Activated CD4-positive, alpha-beta memory T cell treated with anti-CD3 and anti-CD28 coated beads for 36 hours (primary cell): ENCODE measurements at regions of chr6 and their contacts with region 1.

Region 1: GRCh38 chr6:45830441-45831139 is 185.1 kb downstream of the CLIC5 start:
- DNase-seq: peak; percentile 88
- H3K4me3 Mint-ChIP-seq: peak overlapping the region; percentile 75
- H3K27ac Mint-ChIP-seq: peak overlapping the region; percentile 95
- H3K4me1 Mint-ChIP-seq: peaks cover 59% of the 10 kb centered on the region
- H3K27me3 Mint-ChIP-seq: peaks cover 2% of the 10 kb centered on the region

Region 2: DNA sequence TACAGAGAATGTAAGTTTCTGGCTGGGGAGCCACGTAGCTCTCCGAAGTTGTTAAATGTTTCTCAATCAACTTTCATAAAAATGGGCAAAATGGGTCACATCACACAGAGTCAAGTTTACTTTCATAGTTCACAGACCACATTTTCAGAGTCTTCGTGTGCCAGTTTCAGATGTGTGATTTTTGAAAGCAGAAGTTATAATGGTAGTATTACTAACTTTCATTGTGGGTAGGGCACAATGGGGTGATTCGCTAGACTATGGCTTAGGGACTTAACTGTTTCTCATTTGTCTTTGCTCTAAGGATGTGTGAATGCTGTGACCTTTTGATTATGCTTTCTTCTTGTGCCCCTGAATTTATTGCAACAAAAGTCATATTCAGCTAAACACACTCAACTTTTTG is 343.9 kb before region 1 on chr6:
- CTCF ChIA-PET with region 1: no interaction called
- POLR2A ChIA-PET with region 1: no interaction called
- intact Hi-C with region 1: loop called (anchors 5 kb)
- DNase-seq: peak; percentile 45
- H3K4me3 Mint-ChIP-seq: peak overlapping the region; percentile 21
- H3K27ac Mint-ChIP-seq: peak overlapping the region; percentile 67
- H3K4me1 Mint-ChIP-seq: peaks cover 56% of the 10 kb centered on the region
- H3K27me3 Mint-ChIP-seq: no peaks in the 10 kb centered on the region

Region 3: DNA sequence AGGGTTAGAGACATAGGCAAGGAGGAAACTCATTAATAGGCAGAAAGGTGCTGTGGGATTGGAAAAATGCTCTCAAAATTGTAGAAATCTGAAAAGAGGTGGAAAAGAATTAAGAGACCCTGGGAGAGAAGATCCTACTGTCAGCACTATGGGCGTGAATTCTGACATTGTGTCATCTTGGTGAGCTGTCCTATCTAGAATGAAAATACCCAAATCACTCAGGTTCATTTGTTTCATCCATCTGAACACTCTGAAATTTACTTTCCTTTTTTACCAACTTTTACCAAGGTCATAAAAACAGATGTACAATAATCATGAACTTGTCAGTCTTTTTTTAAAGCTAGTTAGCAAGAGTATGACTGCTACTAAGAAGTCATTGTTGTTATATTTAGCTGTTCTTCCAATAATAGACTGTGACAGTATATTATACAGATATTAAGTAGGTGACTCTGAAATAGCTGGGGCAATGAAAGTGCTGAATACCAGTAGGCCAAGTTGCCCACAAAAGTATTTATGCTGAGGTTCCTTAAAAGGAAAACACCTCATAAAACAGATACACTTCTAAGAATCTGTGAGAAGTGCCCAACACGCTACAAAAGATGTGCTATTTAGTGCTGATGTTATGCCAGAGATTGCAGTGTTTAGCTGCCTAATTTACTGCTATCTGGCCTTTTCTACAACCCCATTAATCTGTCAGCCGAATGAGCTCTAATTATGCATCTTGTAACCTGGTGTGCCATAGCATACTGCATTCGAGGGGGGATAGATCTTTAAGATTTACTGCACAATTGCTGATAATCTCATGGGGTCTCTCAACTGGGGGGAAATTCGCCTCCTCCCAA is 235.4 kb before region 1 on chr6:
- CTCF ChIA-PET with region 1: no interaction called
- POLR2A ChIA-PET with region 1: no interaction called
- intact Hi-C with region 1: loop called (anchors 2 kb)
- DNase-seq: no peak
- H3K4me3 Mint-ChIP-seq: no peak overlapping the region
- H3K27ac Mint-ChIP-seq: peak overlapping the region; percentile 78
- H3K4me1 Mint-ChIP-seq: peaks cover 67% of the 10 kb centered on the region
- H3K27me3 Mint-ChIP-seq: no peaks in the 10 kb centered on the region

Region 4: GRCh38 chr6:45843848-45844521 is 13.4 kb after region 1 on chr6:
- CTCF ChIA-PET with region 1: no interaction called
- POLR2A ChIA-PET with region 1: no interaction called
- intact Hi-C with region 1: no loop called
- DNase-seq: no peak
- H3K4me3 Mint-ChIP-seq: no peak overlapping the region
- H3K27ac Mint-ChIP-seq: no peak overlapping the region
- H3K4me1 Mint-ChIP-seq: no peaks in the 10 kb centered on the region
- H3K27me3 Mint-ChIP-seq: no peaks in the 10 kb centered on the region